ENCODE measurements at regions of chr1 and their contacts with region 1.

Region 1: GRCh38 chr1:40143891-40144575 is 17.2 kb upstream of the RLF start:
- DNase-seq: peak; percentile 65

Region 2: DNA sequence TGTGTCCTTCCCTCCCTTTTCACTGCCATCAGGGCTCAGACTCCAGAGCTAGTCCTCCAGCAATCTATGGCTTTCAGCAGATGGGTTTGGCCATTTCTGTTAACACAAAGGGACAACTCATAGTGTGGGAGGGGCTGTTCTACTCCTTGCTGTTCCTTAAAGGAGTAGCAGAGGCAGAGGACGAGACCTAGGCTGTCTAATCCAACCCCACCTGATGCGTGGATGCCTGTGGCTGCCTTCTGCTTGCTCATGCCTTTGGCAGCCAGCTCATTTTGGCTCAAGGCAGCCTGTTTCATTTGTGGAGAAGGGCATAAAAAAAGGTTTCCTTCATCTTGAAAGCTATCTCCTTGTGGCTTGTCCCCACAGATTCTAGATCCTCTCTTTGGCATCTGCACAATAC is 162.1 kb before region 1 on chr1:
- CTCF ChIA-PET with region 1: no interaction called
- POLR2A ChIA-PET with region 1: no interaction called
- DNase-seq: no peak

Region 3: GRCh38 chr1:39995973-39996393 is 148.1 kb before region 1 on chr1:
- CTCF ChIA-PET with region 1: no interaction called
- POLR2A ChIA-PET with region 1: no interaction called
- DNase-seq: no peak

Region 4: GRCh38 chr1:40081871-40082270 is 62.2 kb before region 1 on chr1:
- CTCF ChIA-PET with region 1: interaction called, 10 read pairs
- POLR2A ChIA-PET with region 1: no interaction called
- DNase-seq: no peak

Region 5: DNA sequence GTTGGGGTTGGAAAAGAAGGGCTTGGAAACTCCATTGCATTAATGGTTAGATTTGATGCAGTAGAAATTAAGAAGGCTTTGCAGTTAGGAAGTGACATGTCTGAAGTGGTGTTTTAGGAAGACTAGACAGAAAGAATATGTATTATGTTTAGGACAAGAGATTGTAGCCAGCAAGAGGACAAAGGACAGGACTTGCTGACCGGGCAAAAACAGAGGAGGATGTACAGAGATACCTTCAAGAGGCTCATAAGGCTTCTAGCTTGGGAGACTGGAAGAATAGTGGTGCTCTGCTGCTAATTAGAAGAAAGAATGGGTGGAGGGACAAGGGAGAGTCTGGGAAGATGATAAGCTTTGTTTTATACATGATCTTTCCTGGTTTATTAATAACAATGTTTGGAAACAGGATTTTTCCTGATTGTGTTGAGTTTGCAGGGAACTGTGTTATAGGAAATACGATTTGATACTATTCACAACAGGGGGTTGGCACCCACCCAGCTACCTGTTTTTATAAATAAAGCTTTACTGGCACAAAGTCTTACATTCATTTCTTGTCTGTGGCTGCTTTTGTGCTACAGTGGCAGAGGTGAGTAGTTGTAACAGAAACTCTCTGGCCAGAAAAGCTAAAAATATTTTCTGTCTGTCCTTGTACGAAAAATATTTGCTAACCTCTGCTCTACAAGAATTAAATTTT is 66.6 kb after region 1 on chr1:
- CTCF ChIA-PET with region 1: no interaction called
- POLR2A ChIA-PET with region 1: no interaction called
- DNase-seq: no peak

Region 6: GRCh38 chr1:40315239-40315794 is 171.3 kb after region 1 on chr1:
- CTCF ChIA-PET with region 1: interaction called, 21 read pairs
- POLR2A ChIA-PET with region 1: interaction called, 5 read pairs
- DNase-seq: peak; percentile 90

Region 7: DNA sequence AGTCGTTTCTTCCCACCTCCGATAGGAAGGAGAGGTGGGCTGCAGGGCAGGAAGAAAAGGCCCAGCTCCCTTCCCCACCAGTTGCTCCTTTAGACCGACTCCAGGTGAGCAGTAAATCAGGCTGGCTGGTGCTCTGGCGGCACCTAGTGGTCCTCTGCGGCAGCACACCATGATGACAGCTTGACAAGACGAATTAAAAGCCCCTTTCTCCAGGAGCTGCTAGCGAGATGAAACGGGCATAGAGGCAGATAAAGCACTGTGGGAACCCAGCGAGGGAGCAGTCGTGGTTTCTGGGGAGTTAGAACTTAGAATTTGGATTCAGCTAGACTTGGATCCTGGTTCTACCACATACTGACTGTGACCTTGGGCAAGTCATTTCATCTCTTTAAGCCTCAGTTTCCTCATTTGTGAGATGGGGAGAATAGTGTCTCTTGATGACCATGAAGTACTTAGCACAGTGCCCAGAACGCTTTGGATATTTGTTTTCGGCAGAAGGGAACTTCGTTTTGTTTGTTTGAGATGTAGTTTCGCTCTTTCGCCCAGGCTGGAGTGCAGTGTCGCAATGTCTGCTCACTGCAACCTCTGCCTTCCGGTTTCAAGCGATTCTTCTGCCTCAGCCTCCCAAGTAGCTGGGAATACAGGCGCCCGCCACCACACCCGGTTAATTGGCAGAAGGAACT is 194.9 kb after region 1 on chr1:
- CTCF ChIA-PET with region 1: interaction called, 36 read pairs
- POLR2A ChIA-PET with region 1: no interaction called
- DNase-seq: peak; percentile 83

Region 8: DNA sequence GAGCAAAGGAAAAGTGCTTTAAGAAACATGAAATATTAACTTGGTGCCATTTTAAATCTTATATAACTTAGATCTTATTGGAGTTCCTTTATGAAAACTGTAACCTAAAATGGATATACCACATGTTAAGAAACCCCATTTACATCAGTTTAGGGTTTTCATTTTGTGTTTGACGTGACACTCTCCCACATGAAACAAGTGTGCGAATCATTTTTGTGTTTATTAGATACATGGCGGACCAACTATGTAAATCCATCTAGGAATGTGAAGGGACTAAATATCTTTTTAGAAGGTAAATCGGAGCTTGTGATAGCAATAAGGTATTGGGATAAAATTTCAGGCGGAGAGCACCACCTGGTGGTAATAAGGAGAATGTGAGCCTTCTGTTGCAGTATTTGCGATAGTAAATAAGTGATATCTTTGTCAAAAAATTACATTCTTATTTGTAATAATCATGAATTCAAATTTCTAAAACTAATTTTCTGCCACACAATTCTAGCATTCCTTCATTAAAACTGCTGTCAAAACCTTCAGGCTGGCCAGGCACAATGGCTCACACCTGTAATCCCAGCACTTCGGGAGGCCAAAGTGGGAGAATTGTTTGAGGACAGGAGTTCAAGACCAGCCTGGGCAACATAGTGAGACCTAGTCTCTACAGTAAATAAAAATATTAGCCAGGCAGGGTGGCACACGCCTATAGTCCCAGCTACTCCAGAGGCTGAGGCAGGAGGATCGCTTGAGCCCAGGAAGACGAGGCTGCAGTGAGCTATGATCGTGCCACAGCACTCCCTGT is 260.8 kb after region 1 on chr1:
- CTCF ChIA-PET with region 1: interaction called, 12 read pairs
- POLR2A ChIA-PET with region 1: no interaction called
- DNase-seq: peak; percentile 40

Region 9: GRCh38 chr1:40438391-40439015 is 294.5 kb after region 1 on chr1:
- CTCF ChIA-PET with region 1: interaction called, 10 read pairs
- POLR2A ChIA-PET with region 1: no interaction called
- DNase-seq: peak; percentile 57

Region 10: GRCh38 chr1:40553017-40553416 is 409.0 kb after region 1 on chr1:
- CTCF ChIA-PET with region 1: no interaction called
- POLR2A ChIA-PET with region 1: no interaction called
- DNase-seq: no peak